ENCODE measurements at regions of chr19 and their contacts with region 1.

Region 1: DNA sequence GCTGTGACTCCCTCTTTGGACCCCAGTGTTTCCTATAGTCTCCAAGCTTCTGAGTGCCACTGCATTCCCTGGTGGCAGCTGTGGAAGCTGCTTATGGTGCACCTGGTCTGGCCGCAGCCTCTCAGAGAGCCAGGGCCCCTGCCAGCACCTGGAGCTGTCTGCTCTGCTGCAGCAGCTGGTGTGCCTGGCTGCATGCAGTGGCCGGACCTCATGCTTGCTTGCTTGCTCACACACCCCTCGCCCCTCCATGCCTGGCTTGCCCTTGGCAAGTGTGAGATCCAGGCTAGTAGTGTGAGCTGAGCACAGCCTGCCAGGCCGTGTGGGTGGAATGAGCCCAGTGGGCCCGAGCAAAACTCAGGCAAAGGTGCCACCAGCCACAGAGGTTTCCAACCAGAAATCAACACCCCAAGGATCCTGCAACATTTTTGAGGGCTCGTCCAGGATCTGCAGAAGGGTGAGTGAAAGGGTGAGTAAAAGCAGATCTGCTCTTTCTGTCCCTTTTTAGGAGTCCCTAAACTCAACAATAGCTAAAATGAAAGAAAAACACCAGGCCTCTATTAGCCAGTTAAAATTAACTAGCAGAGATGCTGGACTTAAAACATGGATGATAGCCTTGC is 7.6 kb upstream of the MLLT1 start:
- DNase-seq: no peak
- H3K4me3 ChIP-seq: no peak overlapping the region
- CTCF ChIP-seq: no peak

Region 2: GRCh38 chr19:6333440-6333839 is 46.1 kb after region 1 on chr19 and contains the start of gene ACER1:
- in situ Hi-C with region 1: loop called (anchors 5 kb)
- DNase-seq: no peak
- H3K4me3 ChIP-seq: no peak within 1 kb of the TSS
- CTCF ChIP-seq: no peak

Measured in astrocyte of the cerebellum (primary cell).